MCF 10A (cell line): ENCODE measurements at regions of chr1 and their contacts with region 1.

Region 1: GRCh38 chr1:53278201-53278725 is 39.9 kb upstream of the MAGOH start:
- DNase-seq: peak; percentile 46
- H3K4me3 Mint-ChIP-seq: no peak overlapping the region
- H3K27ac Mint-ChIP-seq: peak overlapping the region; percentile 36
- H3K4me1 Mint-ChIP-seq: peaks cover 13% of the 10 kb centered on the region
- H3K27me3 Mint-ChIP-seq: no peaks in the 10 kb centered on the region
- CTCF ChIP-seq: peak; percentile 96

Region 2: GRCh38 chr1:52296345-52296744 is 981.9 kb before region 1 on chr1:
- CTCF ChIA-PET with region 1: no interaction called
- POLR2A ChIA-PET with region 1: no interaction called
- intact Hi-C with region 1: no loop called
- DNase-seq: peak; percentile 70
- H3K4me3 Mint-ChIP-seq: no peak overlapping the region
- H3K27ac Mint-ChIP-seq: no peak overlapping the region
- H3K4me1 Mint-ChIP-seq: no peaks in the 10 kb centered on the region
- H3K27me3 Mint-ChIP-seq: no peaks in the 10 kb centered on the region
- CTCF ChIP-seq: peak; percentile 62

Region 3: DNA sequence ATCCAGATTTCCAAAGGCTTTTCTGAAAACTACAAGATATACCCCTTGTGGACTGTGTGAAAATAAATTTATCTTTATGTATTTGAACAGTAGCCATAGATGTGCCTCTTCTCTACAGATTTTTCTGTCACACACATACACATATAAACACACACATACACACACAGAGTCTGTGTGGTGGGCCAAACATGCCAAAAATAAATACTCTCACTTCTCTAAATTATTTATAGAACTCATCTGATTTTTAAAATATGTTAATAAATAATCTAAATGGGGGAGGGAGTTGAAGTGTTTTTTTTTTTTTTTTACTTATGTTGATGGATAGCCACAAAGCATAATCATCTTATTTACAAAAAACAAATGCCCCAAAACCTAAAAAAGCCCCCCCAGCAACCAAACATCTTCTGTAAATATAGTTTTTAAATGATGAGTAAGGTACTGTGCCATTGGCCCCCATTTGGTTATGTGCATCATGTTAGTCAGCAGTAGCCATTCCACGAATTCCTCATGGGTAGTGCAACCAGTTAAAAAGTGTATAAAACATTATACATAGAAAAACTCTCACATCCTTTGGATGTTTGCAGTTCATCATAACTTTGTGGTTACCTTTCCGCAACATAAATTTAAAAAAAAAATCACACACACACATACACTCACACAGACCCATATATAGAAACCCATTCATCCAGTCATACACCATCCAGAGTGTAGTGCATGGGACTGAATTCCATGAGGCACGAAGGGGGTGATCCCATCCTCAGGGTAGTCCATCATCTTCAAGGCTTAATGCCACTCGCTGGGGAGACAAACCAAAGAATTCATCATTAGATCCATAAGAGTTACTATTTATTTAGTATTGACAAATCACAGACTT is 31.8 kb before region 1 on chr1:
- CTCF ChIA-PET with region 1: interaction called, 10 read pairs
- POLR2A ChIA-PET with region 1: no interaction called
- intact Hi-C with region 1: no loop called
- DNase-seq: no peak
- H3K4me3 Mint-ChIP-seq: no peak overlapping the region
- H3K27ac Mint-ChIP-seq: no peak overlapping the region
- H3K4me1 Mint-ChIP-seq: no peaks in the 10 kb centered on the region
- H3K27me3 Mint-ChIP-seq: no peaks in the 10 kb centered on the region
- CTCF ChIP-seq: no peak

Region 4: DNA sequence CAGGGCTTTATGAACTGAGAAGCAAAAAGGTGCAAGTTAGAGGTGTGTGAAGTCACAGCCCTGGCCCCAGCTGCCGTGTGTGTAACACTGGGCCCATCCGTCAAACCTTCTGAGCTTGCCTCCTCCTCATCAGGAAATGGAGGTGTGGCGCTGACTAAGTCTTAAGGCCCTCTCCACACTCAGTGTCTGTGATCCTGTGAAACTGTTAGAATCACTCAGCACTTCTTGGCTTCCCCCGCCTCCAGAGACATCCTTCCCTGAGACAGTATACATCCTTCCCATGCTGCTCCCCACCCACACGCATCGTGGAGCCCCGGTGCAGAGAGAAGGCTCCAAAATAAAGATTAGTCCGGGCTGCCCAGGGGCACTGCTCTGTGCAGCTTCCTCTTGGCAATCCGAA is 16.3 kb after region 1 on chr1:
- CTCF ChIA-PET with region 1: interaction called, 43 read pairs
- POLR2A ChIA-PET with region 1: no interaction called
- intact Hi-C with region 1: no loop called
- DNase-seq: peak; percentile 76
- H3K4me3 Mint-ChIP-seq: no peak overlapping the region
- H3K27ac Mint-ChIP-seq: peak overlapping the region; percentile 84
- H3K4me1 Mint-ChIP-seq: peaks cover 19% of the 10 kb centered on the region
- H3K27me3 Mint-ChIP-seq: no peaks in the 10 kb centered on the region
- CTCF ChIP-seq: no peak

Region 5: GRCh38 chr1:53381790-53382401 is 103.6 kb after region 1 on chr1:
- CTCF ChIA-PET with region 1: interaction called, 39 read pairs
- POLR2A ChIA-PET with region 1: no interaction called
- intact Hi-C with region 1: no loop called
- DNase-seq: peak; percentile 64
- H3K4me3 Mint-ChIP-seq: no peak overlapping the region
- H3K27ac Mint-ChIP-seq: no peak overlapping the region
- H3K4me1 Mint-ChIP-seq: peaks cover 15% of the 10 kb centered on the region
- H3K27me3 Mint-ChIP-seq: no peaks in the 10 kb centered on the region
- CTCF ChIP-seq: no peak

Region 6: DNA sequence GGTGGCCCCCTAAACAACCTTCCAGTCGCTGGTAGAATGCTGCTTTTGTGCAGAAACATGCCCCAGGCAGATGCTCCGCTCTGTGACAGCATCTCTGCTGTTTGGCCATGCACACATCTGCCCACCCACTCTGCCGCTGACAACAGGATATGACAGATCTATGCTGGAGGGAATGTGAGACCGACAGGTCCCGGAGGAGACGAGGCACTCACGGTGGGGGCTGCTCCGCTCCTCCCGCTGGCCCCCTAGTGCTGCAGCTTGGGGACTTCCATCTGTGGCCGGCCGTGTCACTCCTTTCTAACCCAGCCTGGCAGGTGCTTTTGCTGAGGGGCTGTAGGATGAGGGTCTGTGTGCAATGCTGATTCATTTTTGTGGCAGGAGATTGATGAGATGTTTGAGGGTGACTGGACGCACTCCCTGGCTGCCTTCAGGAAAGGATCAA is 131.9 kb after region 1 on chr1:
- CTCF ChIA-PET with region 1: interaction called, 227 read pairs
- POLR2A ChIA-PET with region 1: no interaction called
- intact Hi-C with region 1: no loop called
- DNase-seq: no peak
- H3K4me3 Mint-ChIP-seq: no peak overlapping the region
- H3K27ac Mint-ChIP-seq: no peak overlapping the region
- H3K4me1 Mint-ChIP-seq: peaks cover 23% of the 10 kb centered on the region
- H3K27me3 Mint-ChIP-seq: peaks cover 19% of the 10 kb centered on the region
- CTCF ChIP-seq: no peak

Region 7: GRCh38 chr1:53754484-53755312 is 476.4 kb after region 1 on chr1:
- CTCF ChIA-PET with region 1: interaction called, 6 read pairs
- POLR2A ChIA-PET with region 1: no interaction called
- intact Hi-C with region 1: loop called (anchors 10 kb)
- DNase-seq: peak; percentile 77
- H3K4me3 Mint-ChIP-seq: no peak overlapping the region
- H3K27ac Mint-ChIP-seq: no peak overlapping the region
- H3K4me1 Mint-ChIP-seq: no peaks in the 10 kb centered on the region
- H3K27me3 Mint-ChIP-seq: peaks cover 1% of the 10 kb centered on the region
- CTCF ChIP-seq: peak; percentile 75